Activated CD8-positive, alpha-beta T cell treated with anti-CD3 and anti-CD28 coated beads, Interleukin-2, amount 10 ng/mL, durations not matched to agents 7 days and 5 days (primary cell): ENCODE measurements at regions of chr10 and their contacts with region 1.

Region 1: GRCh38 chr10:23158370-23158769 is 33.7 kb upstream of the PTF1A start:
- DNase-seq: peak; percentile 59
- ATAC-seq: peak; percentile 76
- H3K4me3 Mint-ChIP-seq: no peak overlapping the region
- H3K27ac Mint-ChIP-seq: no peak overlapping the region
- H3K4me1 Mint-ChIP-seq: peaks cover 9% of the 10 kb centered on the region
- H3K27me3 Mint-ChIP-seq: peaks cover 9% of the 10 kb centered on the region

Region 2: GRCh38 chr10:23171223-23171876 is 13.0 kb after region 1 on chr10:
- CTCF ChIA-PET with region 1: interaction called, 16 read pairs
- POLR2A ChIA-PET with region 1: no interaction called
- DNase-seq: peak; percentile 30
- ATAC-seq: no peak
- H3K4me3 Mint-ChIP-seq: no peak overlapping the region
- H3K27ac Mint-ChIP-seq: no peak overlapping the region
- H3K4me1 Mint-ChIP-seq: no peaks in the 10 kb centered on the region
- H3K27me3 Mint-ChIP-seq: peaks cover 55% of the 10 kb centered on the region